PC-9 (cell line): ENCODE measurements at regions of chr5 and their contacts with region 1.

Region 1: DNA sequence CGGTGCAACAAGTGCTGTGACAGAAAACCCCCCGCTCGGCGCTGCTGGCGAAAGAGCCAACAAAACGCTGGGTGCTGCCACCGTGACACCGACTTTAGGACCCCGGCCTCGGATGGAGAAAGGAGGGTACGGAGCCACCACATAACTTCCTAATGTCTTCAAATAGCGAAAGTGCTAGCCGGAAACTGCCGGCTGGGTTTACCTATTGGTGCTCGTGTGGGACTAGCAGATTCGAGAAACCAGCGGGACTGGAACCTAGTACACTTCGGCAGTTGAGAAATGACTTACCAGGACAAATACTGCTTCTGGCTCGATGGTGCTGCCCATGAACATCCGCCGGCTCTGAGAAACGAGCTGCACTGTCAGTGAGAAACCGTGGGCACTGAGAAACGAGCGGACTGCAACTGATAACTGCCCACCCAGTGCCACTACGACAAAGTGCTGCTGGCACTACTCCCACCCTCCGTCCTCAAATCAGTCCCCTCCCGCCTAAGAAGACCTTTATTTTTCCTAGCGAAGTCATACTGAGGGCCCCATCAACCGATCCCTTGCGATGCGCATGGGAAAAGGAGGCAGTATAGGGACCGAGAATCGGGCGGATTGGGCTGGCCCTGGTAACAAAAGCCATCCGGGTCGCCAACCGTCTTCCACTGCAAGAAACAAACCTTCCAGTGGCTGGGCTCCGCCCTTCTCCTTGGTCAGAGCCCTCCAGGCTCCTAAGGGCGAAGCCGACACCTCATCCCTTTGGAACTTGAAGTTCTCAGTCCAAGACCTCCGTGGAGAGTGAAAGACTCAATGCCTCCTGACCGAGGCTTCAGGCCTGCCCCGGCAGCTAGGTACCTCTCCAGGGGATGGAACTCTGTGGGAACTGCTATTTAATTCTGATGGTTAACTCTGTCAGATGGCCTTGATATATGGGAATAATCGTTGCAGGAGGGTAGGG is 27.0 kb upstream of the ANXA2R start:
- DNase-seq: peak; percentile 91 to 93
- H3K4me3 ChIP-seq: peak overlapping the region; percentile 75
- H3K27ac ChIP-seq: peak overlapping the region; percentile 84
- H3K4me1 ChIP-seq: peaks cover 27% of the 10 kb centered on the region
- H3K27me3 ChIP-seq: no peaks in the 10 kb centered on the region
- CTCF ChIP-seq: no peak

Region 2: DNA sequence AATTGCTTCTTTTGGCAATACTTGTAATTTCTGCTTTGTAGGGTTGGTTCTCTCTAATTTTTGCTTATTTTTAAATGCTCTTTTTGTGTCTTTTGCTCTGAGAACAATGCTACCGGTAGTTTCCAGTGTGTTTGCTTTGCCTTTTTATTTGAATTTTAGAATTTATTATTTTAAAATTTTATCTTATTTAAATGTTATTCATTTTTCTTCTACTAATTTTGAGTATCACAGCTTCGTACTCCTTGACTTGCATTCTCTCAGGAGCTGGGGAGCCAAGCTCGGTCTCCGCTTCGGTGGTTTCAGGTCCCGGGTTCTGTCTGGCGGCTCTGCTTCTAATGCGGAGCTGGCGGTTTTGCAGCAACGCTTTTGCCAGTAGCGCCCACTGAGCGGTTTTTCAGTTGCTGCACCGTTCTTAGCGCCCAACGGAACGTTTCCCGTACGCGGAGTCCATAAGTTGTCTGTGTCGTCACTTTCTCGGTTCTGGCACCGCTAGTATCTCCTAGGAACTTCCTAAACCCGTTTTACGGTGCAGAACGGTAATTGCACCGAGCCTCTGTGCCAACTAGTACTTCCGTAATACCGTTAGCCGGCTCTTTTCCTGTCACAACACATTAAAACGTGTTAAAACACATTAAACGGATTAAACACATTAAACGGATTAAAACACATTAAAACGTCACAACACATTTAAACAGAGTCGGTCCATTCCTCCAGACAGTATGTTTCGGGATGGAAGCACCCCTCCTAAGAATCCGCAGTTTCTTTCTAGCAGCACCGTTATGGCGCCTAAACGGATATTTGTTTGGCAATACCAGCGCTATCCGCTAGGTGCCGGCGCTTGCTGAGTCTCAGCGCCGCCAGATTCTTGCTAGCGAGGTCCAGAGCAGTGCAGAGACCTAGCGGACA is 72.6 kb before region 1 on chr5:
- CTCF ChIA-PET with region 1: no interaction called
- POLR2A ChIA-PET with region 1: no interaction called
- intact Hi-C with region 1: loop called (anchors 2 kb)
- DNase-seq: no peak
- H3K4me3 ChIP-seq: no peak overlapping the region
- H3K27ac ChIP-seq: no peak overlapping the region
- H3K4me1 ChIP-seq: peaks cover 6% of the 10 kb centered on the region
- H3K27me3 ChIP-seq: no peaks in the 10 kb centered on the region
- CTCF ChIP-seq: no peak

Region 3: GRCh38 chr5:43008369-43009153 is 58.5 kb before region 1 on chr5:
- CTCF ChIA-PET with region 1: interaction called, 4 read pairs
- POLR2A ChIA-PET with region 1: interaction called, 5 read pairs
- intact Hi-C with region 1: loop called (anchors 1 kb)
- DNase-seq: peak; percentile 94 to 98
- H3K4me3 ChIP-seq: peak overlapping the region; percentile 58
- H3K27ac ChIP-seq: peak overlapping the region; percentile 85
- H3K4me1 ChIP-seq: peaks cover 15% of the 10 kb centered on the region
- H3K27me3 ChIP-seq: no peaks in the 10 kb centered on the region
- CTCF ChIP-seq: peak; percentile 18; the same call in 1 of the 2 replicates

Region 4: DNA sequence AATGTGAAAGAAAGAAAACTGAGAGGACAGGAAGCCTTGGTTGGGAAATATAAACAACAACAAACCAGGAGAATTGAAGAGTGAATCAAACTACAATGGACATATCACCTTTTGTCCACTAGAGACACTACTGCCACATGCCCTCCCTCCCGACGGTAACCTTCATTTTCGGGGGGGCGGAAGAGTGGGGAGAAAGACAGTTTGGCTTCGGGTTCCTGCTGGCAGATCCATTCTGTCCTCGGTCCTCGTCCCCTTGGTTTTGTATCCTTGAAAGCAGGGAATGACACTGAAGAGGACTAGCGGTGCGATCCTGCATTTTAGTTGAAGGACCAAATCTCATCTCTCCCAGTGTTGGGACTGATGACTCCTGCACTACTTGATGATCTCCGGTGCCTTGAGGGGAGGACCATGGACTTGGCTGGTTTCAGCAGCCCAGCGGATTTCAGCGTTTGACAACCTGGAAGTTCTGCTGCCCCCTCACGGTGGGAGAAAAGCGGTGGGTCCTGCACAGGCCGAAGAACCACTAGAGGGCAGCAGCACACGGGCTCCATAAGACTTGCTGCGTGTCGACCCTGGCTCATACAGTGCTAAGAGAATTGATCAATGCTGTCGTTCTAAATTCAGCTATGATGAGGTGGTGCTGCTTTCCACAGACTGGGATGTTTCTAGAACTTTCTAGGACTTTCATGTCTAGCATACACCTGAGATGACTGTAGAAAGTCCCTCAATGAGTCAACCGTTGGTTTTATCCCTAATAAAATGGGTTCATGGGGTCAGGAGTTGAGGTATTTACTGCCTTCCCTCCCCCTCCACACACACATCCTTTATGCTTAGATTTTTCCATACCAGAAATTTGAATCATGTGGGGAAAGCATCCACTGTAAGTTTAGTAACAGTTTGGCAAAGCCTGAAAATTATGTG is 38.6 kb after region 1 on chr5:
- CTCF ChIA-PET with region 1: interaction called, 7 read pairs
- POLR2A ChIA-PET with region 1: no interaction called
- intact Hi-C with region 1: loop called (anchors 1 kb)
- DNase-seq: peak; percentile 90 to 96
- H3K4me3 ChIP-seq: peak overlapping the region; percentile 51
- H3K27ac ChIP-seq: no peak overlapping the region
- H3K4me1 ChIP-seq: peaks cover 8% of the 10 kb centered on the region; the same call in 1 of the 2 replicates
- H3K27me3 ChIP-seq: no peaks in the 10 kb centered on the region
- CTCF ChIP-seq: peak; percentile 100

Region 5: GRCh38 chr5:43556857-43557542 is 489.9 kb after region 1 on chr5 and contains the start of gene PAIP1:
- CTCF ChIA-PET with region 1: no interaction called
- POLR2A ChIA-PET with region 1: no interaction called
- intact Hi-C with region 1: loop called (anchors 2 kb)
- DNase-seq: peak; percentile 86 to 98
- H3K4me3 ChIP-seq: peak within 1 kb of the TSS; percentile 88
- H3K27ac ChIP-seq: peak within 1 kb of the TSS; percentile 76
- H3K4me1 ChIP-seq: peaks cover 34% of the 10 kb centered on the region
- H3K27me3 ChIP-seq: no peaks in the 10 kb centered on the region
- CTCF ChIP-seq: peak; percentile 71
- total RNA-seq, gene PAIP1: 183 and 191 TPM in 2 replicates